Panc1 (cell line): ENCODE measurements at regions of chr14 and their contacts with region 1.

Region 1: GRCh38 chr14:23160924-23161538 is 22.4 kb downstream of the SLC7A8 start:
- DNase-seq: no peak
- ATAC-seq: no peak
- H3K4me3 ChIP-seq: no peak overlapping the region
- H3K27ac ChIP-seq: no peak overlapping the region
- H3K4me1 ChIP-seq: no peaks in the 10 kb centered on the region
- H3K27me3 ChIP-seq: no peaks in the 10 kb centered on the region
- CTCF ChIP-seq: no peak

Region 2: GRCh38 chr14:23252420-23253333 is 91.6 kb after region 1 on chr14:
- CTCF ChIA-PET with region 1: no interaction called
- POLR2A ChIA-PET with region 1: interaction called, 19 read pairs
- in situ Hi-C with region 1: no loop called
- intact Hi-C with region 1: no loop called
- DNase-seq: no peak
- ATAC-seq: no peak
- H3K4me3 ChIP-seq: no peak overlapping the region
- H3K27ac ChIP-seq: no peak overlapping the region
- H3K4me1 ChIP-seq: no peaks in the 10 kb centered on the region
- H3K27me3 ChIP-seq: peaks cover 5% of the 10 kb centered on the region; the same call in 1 of the 2 replicates
- CTCF ChIP-seq: no peak

Region 3: DNA sequence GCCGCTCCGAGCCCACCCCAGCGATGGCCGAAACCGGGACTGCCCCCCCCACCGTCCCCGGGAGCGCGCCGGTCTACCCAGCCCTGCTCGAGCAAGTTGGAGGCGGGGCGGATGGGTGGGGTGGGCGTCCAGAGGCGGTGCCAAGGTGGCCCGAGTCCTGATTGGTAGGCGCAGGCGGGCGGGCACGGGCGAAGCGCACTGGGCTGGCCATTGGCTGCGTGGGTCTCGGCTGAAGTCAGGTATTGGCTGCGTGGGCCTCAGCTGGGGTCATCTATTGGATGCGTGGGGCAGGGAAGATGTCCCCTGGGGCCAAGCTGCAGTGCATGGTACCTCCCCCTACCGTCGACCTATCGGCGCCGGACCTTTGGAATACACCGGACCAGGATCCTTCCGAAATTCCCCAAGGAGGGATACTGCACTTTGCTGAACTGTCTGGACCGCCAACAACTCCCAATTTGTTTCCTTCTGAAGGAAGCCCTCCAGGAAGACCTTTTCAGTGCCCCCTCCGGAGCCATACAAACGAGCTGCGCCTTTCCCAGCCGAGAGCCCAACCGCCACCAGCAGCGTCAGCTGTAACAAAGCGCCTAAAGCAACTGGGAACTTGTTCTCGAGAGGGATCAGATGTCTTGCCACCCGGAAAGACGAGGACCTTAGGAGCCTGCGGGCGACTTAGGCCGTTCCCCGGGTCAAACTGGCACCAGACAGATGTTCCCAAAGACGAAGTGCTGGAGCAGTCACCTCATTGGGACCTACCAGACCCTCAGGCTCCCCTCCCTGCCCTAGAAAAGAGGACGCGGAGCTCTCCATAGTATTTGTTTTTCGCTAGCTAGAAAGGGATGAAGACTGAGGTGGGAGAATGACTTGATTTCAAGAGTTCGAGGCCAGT is 125.2 kb after region 1 on chr14 and contains the start of gene HOMEZ:
- CTCF ChIA-PET with region 1: no interaction called
- POLR2A ChIA-PET with region 1: no interaction called
- in situ Hi-C with region 1: no loop called
- intact Hi-C with region 1: no loop called
- DNase-seq: peak; percentile 73
- ATAC-seq: peak; percentile 99
- H3K4me3 ChIP-seq: peak within 1 kb of the TSS; percentile 90 to 92
- H3K27ac ChIP-seq: peak within 1 kb of the TSS; percentile 92
- H3K4me1 ChIP-seq: peaks cover 7% of the 10 kb centered on the region
- H3K27me3 ChIP-seq: no peaks in the 10 kb centered on the region
- CTCF ChIP-seq: no peak
- total RNA-seq, gene HOMEZ: 7.6 TPM